Natural killer cell (primary cell): ENCODE measurements at regions of chr7 and their contacts with region 1.

Region 1: DNA sequence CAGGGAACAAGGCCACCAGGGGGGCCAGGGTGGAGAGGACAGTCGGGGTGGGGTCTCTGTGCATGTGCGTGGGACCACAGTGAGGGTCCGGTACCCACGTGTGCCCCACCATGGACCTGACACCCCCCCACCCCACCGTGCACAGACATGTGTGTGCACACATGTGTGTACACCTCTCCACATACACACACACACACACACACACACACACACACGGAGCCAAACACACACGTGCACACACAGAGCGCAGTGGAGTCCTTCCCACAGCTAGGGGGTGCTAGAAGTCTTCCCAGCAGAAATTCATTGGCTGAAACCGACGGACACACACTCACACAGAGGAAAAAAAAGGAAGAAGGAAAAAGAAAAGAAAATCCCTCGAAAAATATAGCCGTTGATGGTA is 42.8 kb upstream of the GNA12 start:
- DNase-seq: peak in 1 of 2 donors; percentile 82
- ATAC-seq: peak; percentile 75 to 93 (median 86)
- H3K4me3 ChIP-seq: no peak overlapping the region
- H3K4me3 Mint-ChIP-seq: no peak overlapping the region
- H3K27ac ChIP-seq: no peak overlapping the region
- H3K27ac Mint-ChIP-seq: no peak overlapping the region
- H3K4me1 ChIP-seq: peaks cover 7% of the 10 kb centered on the region
- H3K4me1 Mint-ChIP-seq: peaks cover 6% of the 10 kb centered on the region in 2 donors
- H3K27me3 ChIP-seq: no peaks in the 10 kb centered on the region
- H3K27me3 Mint-ChIP-seq: no peaks in the 10 kb centered on the region
- CTCF ChIP-seq: peak; percentile 58

Region 2: GRCh38 chr7:2508327-2509215 is 378.3 kb before region 1 on chr7:
- intact Hi-C with region 1: no loop called
- DNase-seq: peak; percentile 72 to 94
- ATAC-seq: peak; percentile 49 to 68 (median 61)
- H3K4me3 ChIP-seq: peak overlapping the region; percentile 12
- H3K4me3 Mint-ChIP-seq: peak overlapping the region; percentile 76
- H3K27ac ChIP-seq: peak overlapping the region; percentile 90
- H3K27ac Mint-ChIP-seq: peak overlapping the region in 1 of 2 donors; percentile 95
- H3K4me1 ChIP-seq: peaks cover 64% of the 10 kb centered on the region
- H3K4me1 Mint-ChIP-seq: peaks cover 37 to 61% of the 10 kb centered on the region in 2 donors
- H3K27me3 ChIP-seq: no peaks in the 10 kb centered on the region
- H3K27me3 Mint-ChIP-seq: no peaks in the 10 kb centered on the region
- CTCF ChIP-seq: no peak

Region 3: GRCh38 chr7:2641406-2642393 is 245.2 kb before region 1 on chr7:
- intact Hi-C with region 1: no loop called
- DNase-seq: no peak
- ATAC-seq: no peak
- H3K4me3 ChIP-seq: no peak overlapping the region
- H3K4me3 Mint-ChIP-seq: no peak overlapping the region
- H3K27ac ChIP-seq: peak overlapping the region; percentile 42
- H3K27ac Mint-ChIP-seq: no peak overlapping the region
- H3K4me1 ChIP-seq: peaks cover 68% of the 10 kb centered on the region
- H3K4me1 Mint-ChIP-seq: peaks cover 15 to 28% of the 10 kb centered on the region in 2 donors
- H3K27me3 ChIP-seq: no peaks in the 10 kb centered on the region
- H3K27me3 Mint-ChIP-seq: no peaks in the 10 kb centered on the region
- CTCF ChIP-seq: no peak

Region 4: DNA sequence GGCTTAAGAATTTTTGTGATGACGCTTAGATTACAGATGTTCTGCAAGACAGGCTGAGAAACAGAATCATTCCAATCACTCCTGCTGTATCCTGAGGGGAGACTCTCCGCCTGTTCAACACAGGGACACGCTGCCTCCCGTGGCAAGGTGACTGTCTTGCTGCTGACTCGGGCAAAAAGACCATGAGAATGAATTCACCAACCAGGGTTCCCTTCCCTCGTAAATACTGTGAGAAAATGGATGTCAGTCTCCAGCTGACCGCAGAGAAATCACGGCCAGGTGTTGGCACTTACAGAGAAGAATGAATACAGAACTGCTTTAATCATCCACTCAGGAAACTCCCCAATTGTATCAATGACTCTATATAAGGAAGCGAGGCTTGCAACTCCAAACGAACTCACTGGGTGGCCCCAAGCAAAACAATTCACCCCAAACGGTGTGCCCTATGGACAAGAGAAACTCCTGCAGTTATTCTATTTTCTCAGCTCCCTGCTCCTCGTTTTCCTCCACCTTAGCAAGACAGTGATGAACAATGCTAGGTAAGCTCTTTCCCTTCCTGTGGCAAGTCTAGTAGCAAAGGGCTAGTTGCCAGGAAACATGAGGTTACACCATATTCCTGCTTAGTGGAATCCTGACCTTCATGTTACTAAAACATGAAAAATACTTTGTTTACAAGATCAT is 65.6 kb before region 1 on chr7:
- intact Hi-C with region 1: no loop called
- DNase-seq: no peak
- ATAC-seq: no peak
- H3K4me3 ChIP-seq: no peak overlapping the region
- H3K4me3 Mint-ChIP-seq: no peak overlapping the region
- H3K27ac ChIP-seq: no peak overlapping the region
- H3K27ac Mint-ChIP-seq: no peak overlapping the region
- H3K4me1 ChIP-seq: peaks cover 14% of the 10 kb centered on the region
- H3K4me1 Mint-ChIP-seq: peaks cover 21 to 29% of the 10 kb centered on the region in 2 donors
- H3K27me3 ChIP-seq: no peaks in the 10 kb centered on the region
- H3K27me3 Mint-ChIP-seq: no peaks in the 10 kb centered on the region
- CTCF ChIP-seq: no peak

Region 5: DNA sequence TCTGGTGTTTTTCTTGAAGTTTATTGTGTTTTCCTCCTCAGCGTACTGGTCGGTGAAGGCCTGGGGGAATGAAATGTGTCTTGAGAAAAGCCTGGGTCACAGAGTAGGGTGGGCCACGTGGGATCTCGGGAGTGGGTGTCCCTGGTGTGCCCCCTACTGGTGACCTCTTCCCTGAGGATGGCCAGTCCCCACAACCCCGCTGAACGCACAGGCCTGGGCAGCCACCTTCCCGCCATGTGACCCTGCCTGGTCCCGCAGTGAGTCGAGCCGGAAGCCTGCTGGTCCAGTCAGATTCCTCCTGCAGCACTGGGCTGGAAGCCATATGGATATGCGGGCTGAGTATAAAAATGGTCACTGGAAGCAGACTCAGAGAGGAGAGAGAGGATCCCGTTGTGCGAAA is 10.1 kb after region 1 on chr7:
- intact Hi-C with region 1: no loop called
- DNase-seq: no peak
- ATAC-seq: no peak
- H3K4me3 ChIP-seq: no peak overlapping the region
- H3K4me3 Mint-ChIP-seq: no peak overlapping the region
- H3K27ac ChIP-seq: no peak overlapping the region
- H3K27ac Mint-ChIP-seq: no peak overlapping the region
- H3K4me1 ChIP-seq: peaks cover 42% of the 10 kb centered on the region
- H3K4me1 Mint-ChIP-seq: peaks cover 24 to 29% of the 10 kb centered on the region in 2 donors
- H3K27me3 ChIP-seq: no peaks in the 10 kb centered on the region
- H3K27me3 Mint-ChIP-seq: no peaks in the 10 kb centered on the region
- CTCF ChIP-seq: no peak

Region 6: DNA sequence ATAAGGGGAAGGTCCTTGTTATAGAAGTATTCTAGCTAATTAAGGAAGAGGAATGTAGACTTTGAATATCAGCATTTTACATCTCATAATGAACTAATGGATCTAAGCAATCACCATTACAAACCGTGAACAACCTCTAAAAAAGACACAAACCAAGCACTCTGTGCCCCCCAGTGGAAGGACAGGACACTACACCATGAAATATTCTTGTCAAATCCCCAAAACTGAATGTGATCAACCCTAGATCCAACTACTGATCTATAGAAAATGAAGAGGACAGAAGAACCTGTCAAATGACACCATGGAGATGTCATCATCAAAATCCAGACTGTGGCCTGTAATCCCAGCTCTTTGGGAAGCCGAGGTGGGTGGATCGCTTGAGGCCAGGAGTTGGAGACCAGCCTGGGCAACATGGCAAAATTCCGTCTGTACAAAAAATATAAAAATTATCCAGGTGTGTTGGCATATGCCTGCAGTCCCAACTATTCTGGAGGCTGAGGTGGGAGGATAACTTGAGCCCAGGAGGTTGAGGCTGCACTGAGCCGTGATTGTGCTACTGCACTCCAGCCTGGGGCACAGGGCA is 268.1 kb after region 1 on chr7:
- intact Hi-C with region 1: loop called (anchors 1 kb)
- DNase-seq: peak; percentile 46 to 84
- ATAC-seq: peak; percentile 74 to 99 (median 87)
- H3K4me3 ChIP-seq: no peak overlapping the region
- H3K4me3 Mint-ChIP-seq: no peak overlapping the region
- H3K27ac ChIP-seq: no peak overlapping the region
- H3K27ac Mint-ChIP-seq: peak overlapping the region; percentile 37 to 74
- H3K4me1 ChIP-seq: peaks cover 8% of the 10 kb centered on the region
- H3K4me1 Mint-ChIP-seq: peaks cover 12 to 21% of the 10 kb centered on the region in 2 donors
- H3K27me3 ChIP-seq: no peaks in the 10 kb centered on the region
- H3K27me3 Mint-ChIP-seq: no peaks in the 10 kb centered on the region
- CTCF ChIP-seq: peak; percentile 87